Calu3 (cell line): ENCODE measurements at regions of chr18 and their contacts with region 1.

Region 1: DNA sequence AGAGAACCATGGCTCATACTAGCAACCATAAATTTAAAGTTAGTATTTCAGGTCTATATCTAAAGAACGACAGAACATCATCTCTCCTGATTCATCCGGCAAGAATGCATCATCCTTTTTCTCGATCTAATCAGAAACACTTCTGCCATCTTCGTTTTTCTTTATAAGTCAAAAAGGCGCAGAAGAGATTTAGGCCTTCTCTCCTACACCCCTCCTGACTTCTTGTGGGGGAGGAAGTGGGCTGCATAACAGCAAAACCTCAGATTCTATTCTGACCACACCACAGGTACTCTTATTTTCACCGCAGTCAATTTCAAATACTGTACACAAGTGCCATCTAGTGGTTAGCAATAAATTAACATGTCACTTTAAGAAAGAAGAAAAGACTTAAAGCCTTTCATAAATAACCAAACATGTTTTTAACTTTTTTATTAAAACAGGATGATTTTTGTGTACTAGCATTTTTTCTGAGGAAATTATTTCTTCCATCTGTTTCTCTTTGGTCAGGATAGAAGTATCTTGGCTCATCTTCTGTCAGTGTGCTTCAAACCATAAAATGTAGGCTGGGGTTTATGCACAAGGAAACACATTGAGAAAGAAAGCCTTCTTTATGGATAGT is 48.4 kb upstream of the PIK3C3 start:
- DNase-seq: no peak
- H3K4me3 Mint-ChIP-seq: no peak overlapping the region
- H3K27ac Mint-ChIP-seq: no peak overlapping the region
- H3K4me1 Mint-ChIP-seq: no peaks in the 10 kb centered on the region
- H3K27me3 Mint-ChIP-seq: no peaks in the 10 kb centered on the region
- CTCF ChIP-seq: peak; percentile 61

Region 2: GRCh38 chr18:41406834-41407233 is 499.8 kb before region 1 on chr18:
- CTCF ChIA-PET with region 1: no interaction called
- intact Hi-C with region 1: loop called (anchors 10 kb)
- DNase-seq: no peak
- H3K4me3 Mint-ChIP-seq: no peak overlapping the region
- H3K27ac Mint-ChIP-seq: no peak overlapping the region
- H3K4me1 Mint-ChIP-seq: no peaks in the 10 kb centered on the region
- H3K27me3 Mint-ChIP-seq: no peaks in the 10 kb centered on the region
- CTCF ChIP-seq: no peak

Region 3: DNA sequence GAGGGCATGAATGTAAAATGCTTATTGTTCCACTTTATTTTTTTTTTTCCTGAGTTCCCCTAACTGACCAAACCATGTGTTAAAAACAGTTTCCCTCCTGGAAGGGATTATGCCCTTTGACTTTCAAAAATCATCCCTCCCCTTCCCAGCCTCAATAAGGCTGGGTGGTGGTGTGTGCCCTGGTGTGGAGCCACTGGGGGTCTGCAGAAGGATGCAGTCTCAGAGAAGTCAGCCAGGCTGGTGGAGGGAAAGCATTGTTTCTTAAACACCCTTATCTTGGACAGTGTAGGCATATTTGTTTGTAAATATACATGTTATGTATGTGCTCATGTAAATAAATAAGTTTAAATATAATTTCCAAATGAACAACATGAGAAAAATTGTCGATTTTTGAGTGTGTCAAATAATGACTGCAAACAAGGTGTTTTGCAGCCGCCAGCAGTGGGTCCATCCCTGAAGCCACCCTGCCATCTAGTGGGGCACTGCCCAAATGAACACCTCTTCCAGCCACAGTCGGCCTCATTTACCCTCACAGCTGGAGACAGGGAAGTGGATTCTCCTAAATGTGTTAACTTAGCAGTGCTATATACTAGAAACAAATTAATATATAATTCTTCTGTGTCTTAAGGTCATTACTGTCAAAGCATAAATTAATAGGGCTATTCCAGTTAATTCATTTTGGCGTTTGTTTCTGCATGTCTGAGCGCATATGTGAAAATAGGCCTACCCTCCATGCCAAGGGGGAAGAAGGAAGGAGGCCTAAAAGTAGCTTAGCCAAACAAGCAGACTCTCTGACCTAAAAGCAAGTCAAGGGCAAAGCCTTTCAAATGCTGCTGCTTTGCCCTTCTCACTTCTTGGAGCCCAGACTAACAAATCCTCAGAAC is 161.2 kb before region 1 on chr18:
- CTCF ChIA-PET with region 1: no interaction called
- intact Hi-C with region 1: loop called (anchors 5 kb)
- DNase-seq: peak; percentile 69
- H3K4me3 Mint-ChIP-seq: no peak overlapping the region
- H3K27ac Mint-ChIP-seq: no peak overlapping the region
- H3K4me1 Mint-ChIP-seq: peaks cover 8% of the 10 kb centered on the region
- H3K27me3 Mint-ChIP-seq: peaks cover 13% of the 10 kb centered on the region
- CTCF ChIP-seq: peak; percentile 70

Region 4: DNA sequence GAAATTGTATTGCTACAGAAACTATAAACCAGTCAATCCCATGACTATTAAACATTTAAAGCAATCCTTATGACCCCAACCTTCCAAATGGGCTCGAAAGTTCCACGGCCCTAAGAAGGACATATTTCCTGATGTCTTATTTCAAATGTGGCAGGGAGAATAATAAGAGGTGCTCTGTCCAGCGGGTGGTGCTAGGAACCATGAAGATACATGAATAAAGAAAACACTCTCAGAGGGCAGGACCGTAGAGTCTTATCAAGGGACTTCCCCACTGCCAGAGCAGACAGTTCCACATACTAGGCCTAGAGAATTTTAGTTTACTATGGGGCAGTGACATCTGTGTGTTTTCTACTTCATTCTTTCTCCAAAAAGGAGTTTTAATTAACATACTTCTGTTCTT is 138.7 kb before region 1 on chr18:
- CTCF ChIA-PET with region 1: no interaction called
- intact Hi-C with region 1: loop called (anchors 5 kb)
- DNase-seq: no peak
- H3K4me3 Mint-ChIP-seq: no peak overlapping the region
- H3K27ac Mint-ChIP-seq: no peak overlapping the region
- H3K4me1 Mint-ChIP-seq: no peaks in the 10 kb centered on the region
- H3K27me3 Mint-ChIP-seq: peaks cover 80% of the 10 kb centered on the region
- CTCF ChIP-seq: no peak

Region 5: DNA sequence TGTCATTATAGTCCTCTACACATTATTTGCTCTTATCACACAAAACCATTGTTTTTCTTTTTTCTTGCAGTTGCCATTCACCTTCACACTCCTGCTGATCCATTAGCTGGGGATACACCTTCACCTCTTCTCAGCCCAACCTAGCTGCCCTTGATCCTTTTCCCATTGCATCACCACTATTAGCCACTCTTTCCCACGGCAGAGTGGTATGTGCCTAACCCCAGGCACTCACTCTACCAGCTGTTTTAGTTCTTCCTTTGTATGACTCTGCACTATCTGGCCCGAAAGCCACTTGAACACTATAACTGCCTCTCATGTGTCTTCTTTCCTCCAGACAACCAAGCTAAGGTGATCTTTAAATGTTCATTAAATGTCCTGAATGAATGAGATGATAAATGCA is 97.0 kb before region 1 on chr18:
- CTCF ChIA-PET with region 1: no interaction called
- intact Hi-C with region 1: no loop called
- DNase-seq: no peak
- H3K4me3 Mint-ChIP-seq: no peak overlapping the region
- H3K27ac Mint-ChIP-seq: no peak overlapping the region
- H3K4me1 Mint-ChIP-seq: no peaks in the 10 kb centered on the region
- H3K27me3 Mint-ChIP-seq: peaks cover 34% of the 10 kb centered on the region
- CTCF ChIP-seq: no peak

Region 6: GRCh38 chr18:41875094-41875780 is 31.4 kb before region 1 on chr18:
- CTCF ChIA-PET with region 1: no interaction called
- intact Hi-C with region 1: no loop called
- DNase-seq: no peak
- H3K4me3 Mint-ChIP-seq: no peak overlapping the region
- H3K27ac Mint-ChIP-seq: no peak overlapping the region
- H3K4me1 Mint-ChIP-seq: peaks cover 16% of the 10 kb centered on the region
- H3K27me3 Mint-ChIP-seq: no peaks in the 10 kb centered on the region
- CTCF ChIP-seq: no peak

Region 7: DNA sequence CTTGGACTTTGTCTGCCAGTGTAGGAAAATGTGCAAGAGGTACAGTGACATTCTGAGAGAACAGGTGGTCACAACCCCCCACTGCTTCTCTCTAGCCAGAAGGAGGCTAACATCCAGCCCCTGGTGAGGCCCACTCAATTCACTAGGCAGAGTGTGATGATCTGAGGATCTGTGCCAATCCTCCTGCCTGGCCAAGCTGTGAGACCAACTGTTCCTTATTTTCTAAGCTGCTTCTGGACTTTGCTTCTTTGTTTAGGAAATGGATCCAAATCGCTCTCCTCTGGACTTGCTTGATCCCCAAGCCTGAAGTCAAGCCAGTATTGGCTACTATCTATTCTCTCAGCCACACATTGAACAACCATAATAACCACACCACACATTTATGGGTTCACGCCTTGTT is 251.2 kb after region 1 on chr18:
- CTCF ChIA-PET with region 1: no interaction called
- intact Hi-C with region 1: no loop called
- DNase-seq: no peak
- H3K4me3 Mint-ChIP-seq: no peak overlapping the region
- H3K27ac Mint-ChIP-seq: no peak overlapping the region
- H3K4me1 Mint-ChIP-seq: peaks cover 12% of the 10 kb centered on the region
- H3K27me3 Mint-ChIP-seq: no peaks in the 10 kb centered on the region
- CTCF ChIP-seq: no peak

Region 8: GRCh38 chr18:42222557-42222956 is 315.9 kb after region 1 on chr18:
- CTCF ChIA-PET with region 1: no interaction called
- intact Hi-C with region 1: no loop called
- DNase-seq: no peak
- H3K4me3 Mint-ChIP-seq: no peak overlapping the region
- H3K27ac Mint-ChIP-seq: no peak overlapping the region
- H3K4me1 Mint-ChIP-seq: no peaks in the 10 kb centered on the region
- H3K27me3 Mint-ChIP-seq: no peaks in the 10 kb centered on the region
- CTCF ChIP-seq: no peak